OCI-LY7 (cell line): ENCODE measurements at regions of chr2 and their contacts with region 1.

Region 1: GRCh38 chr2:3692381-3692780 is 11.0 kb upstream of the DCDC2C start:
- DNase-seq: peak; percentile 51
- H3K4me3 ChIP-seq: no peak overlapping the region
- H3K27ac ChIP-seq: no peak overlapping the region
- H3K4me1 ChIP-seq: no peaks in the 10 kb centered on the region
- CTCF ChIP-seq: peak; percentile 82

Region 2: DNA sequence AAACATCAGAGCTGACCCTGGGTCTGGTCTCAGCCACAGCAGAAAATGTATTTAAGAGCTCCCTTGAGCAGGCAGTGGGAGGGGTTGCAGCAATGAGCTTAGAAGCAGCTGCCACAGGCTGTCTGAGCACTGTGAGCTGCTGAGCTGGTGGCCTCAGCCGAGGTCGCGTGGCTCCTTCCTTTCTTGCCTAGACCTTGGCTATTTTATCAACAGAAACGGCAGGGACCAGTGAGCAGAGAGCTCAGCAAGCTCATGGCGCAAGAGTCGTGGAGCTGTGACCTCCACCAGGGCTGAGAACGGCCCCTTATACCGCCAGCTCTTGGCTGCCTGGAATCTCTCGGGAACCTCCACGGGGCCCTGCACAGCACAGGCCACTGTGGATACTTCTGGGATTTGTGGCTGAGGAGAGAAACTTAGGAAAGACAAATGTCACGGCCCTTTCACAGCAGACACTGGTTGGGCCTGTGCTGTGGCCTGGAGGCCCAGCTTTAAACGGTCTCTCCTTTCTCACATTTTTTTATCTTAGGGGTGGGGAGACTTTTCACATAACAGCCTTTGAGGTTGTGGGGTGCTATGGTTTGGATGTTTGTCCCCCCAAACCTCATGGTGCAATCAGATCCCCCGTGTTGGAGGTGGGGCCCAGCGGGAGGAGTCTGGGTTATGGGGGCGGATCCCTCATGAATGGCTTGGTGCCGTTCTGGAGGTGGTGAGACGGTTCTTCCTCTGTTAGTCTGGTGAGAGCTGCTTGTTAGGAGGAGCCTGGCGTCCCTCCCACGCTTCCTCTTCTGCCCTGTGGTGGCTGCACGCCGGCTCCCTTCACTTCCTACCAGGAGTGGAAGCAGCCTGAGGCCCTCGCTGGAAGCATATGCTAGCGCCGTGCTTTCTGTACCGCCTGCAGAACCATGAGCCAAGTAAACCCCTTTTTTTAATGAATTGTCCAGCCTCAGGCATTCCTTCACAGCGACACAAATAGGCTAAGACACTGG is 32.6 kb before region 1 on chr2:
- CTCF ChIA-PET with region 1: no interaction called
- POLR2A ChIA-PET with region 1: no interaction called
- intact Hi-C with region 1: no loop called
- DNase-seq: no peak
- H3K4me3 ChIP-seq: no peak overlapping the region
- H3K27ac ChIP-seq: no peak overlapping the region
- H3K4me1 ChIP-seq: peaks cover 26% of the 10 kb centered on the region
- CTCF ChIP-seq: no peak

Region 3: GRCh38 chr2:3712831-3713503 is 20.6 kb after region 1 on chr2:
- CTCF ChIA-PET with region 1: no interaction called
- POLR2A ChIA-PET with region 1: no interaction called
- intact Hi-C with region 1: no loop called
- DNase-seq: no peak
- H3K4me3 ChIP-seq: no peak overlapping the region
- H3K27ac ChIP-seq: no peak overlapping the region
- H3K4me1 ChIP-seq: no peaks in the 10 kb centered on the region
- CTCF ChIP-seq: no peak

Region 4: GRCh38 chr2:3780477-3781402 is 88.4 kb after region 1 on chr2:
- CTCF ChIA-PET with region 1: interaction called, 3 read pairs
- POLR2A ChIA-PET with region 1: no interaction called
- intact Hi-C with region 1: loop called (anchors 5 kb)
- DNase-seq: peak; percentile 68
- H3K4me3 ChIP-seq: no peak overlapping the region
- H3K27ac ChIP-seq: no peak overlapping the region
- H3K4me1 ChIP-seq: peaks cover 5% of the 10 kb centered on the region
- CTCF ChIP-seq: peak; percentile 91

Region 5: GRCh38 chr2:3805201-3805939 is 113.0 kb after region 1 on chr2:
- CTCF ChIA-PET with region 1: no interaction called
- POLR2A ChIA-PET with region 1: no interaction called
- intact Hi-C with region 1: no loop called
- DNase-seq: no peak
- H3K4me3 ChIP-seq: no peak overlapping the region
- H3K27ac ChIP-seq: no peak overlapping the region
- H3K4me1 ChIP-seq: no peaks in the 10 kb centered on the region
- CTCF ChIP-seq: peak; percentile 61